ENCODE measurements at regions of chr3 and their contacts with region 1.

Region 1: GRCh38 chr3:21888656-21889055 is 137.6 kb upstream of the ZNF385D start:
- DNase-seq: no peak
- ATAC-seq: no peak
- H3K4me3 ChIP-seq: no peak overlapping the region
- H3K27ac ChIP-seq: no peak overlapping the region
- H3K4me1 ChIP-seq: peaks cover 0 to 10% (median under 1%) of the 10 kb centered on the region in 12 donors
- H3K27me3 ChIP-seq: no peaks in the 10 kb centered on the region
- CTCF ChIP-seq: no peak
- POLR2A ChIP-seq: no peak

Region 2: GRCh38 chr3:21847005-21847404 is 41.7 kb before region 1 on chr3:
- intact Hi-C with region 1: loop called in 1 of 10 experiments (anchors 5 kb)
- DNase-seq: no peak
- ATAC-seq: no peak
- H3K4me3 ChIP-seq: no peak overlapping the region
- H3K27ac ChIP-seq: no peak overlapping the region
- H3K4me1 ChIP-seq: no peaks in the 10 kb centered on the region
- H3K27me3 ChIP-seq: no peaks in the 10 kb centered on the region
- CTCF ChIP-seq: no peak
- POLR2A ChIP-seq: no peak

Measured in heart left ventricle (tissue), 16 donors.